K562 (cell line): ENCODE measurements at regions of chr1 and their contacts with region 1.

Region 1: GRCh38 chr1:218459878-218460711 is 115.0 kb downstream of the TGFB2 start:
- DNase-seq: peak in 2 of 4 experiments; percentile 28 to 33
- ATAC-seq: peak; percentile 80
- H3K4me3 ChIP-seq: no peak overlapping the region
- H3K27ac ChIP-seq: no peak overlapping the region
- H3K4me1 ChIP-seq: no peaks in the 10 kb centered on the region; a peak in 1 of 5 replicates
- H3K27me3 ChIP-seq: 0 out of 5 replicates have a peak, but pooled peaks cover 0 to 4% of the 10 kb centered on the region in 2 experiments
- CTCF ChIP-seq: no peak
- EP300 ChIP-seq: no peak
- POLR2A ChIP-seq: no peak
- RAD21 ChIP-seq: no peak

Region 2: DNA sequence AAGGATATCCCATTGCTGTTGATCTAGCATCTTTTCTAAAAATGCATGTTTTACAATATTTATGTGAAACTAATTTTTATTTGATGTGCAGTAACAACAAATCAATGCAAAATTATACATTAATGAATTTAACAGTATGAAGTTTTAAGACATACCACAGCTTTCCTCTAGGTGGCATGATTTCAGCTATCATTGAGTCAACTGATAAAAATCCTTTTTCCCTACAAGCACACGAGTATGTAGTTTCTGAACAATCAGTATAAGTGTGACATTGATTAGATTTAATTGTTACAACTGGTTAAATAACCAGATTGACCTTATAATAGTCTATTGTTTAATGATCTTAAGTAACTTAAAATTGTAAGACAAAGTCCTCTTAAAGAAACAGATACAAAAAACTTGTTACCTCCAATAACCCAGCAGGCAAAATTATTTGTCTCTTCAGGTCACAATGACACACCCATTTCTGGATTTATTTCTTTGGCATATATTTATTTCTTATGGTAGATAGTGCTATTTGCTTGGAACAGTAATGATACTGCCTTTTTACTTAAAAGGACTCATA is 120.7 kb before region 1 on chr1:
- CTCF ChIA-PET with region 1: no interaction called
- POLR2A ChIA-PET with region 1: no interaction called
- in situ Hi-C with region 1: no loop called
- intact Hi-C with region 1: loop called (anchors 5 kb)
- DNase-seq: peak in 3 of 4 experiments; percentile 35 to 53 (median 40)
- ATAC-seq: peak; percentile 76
- H3K4me3 ChIP-seq: no peak overlapping the region
- H3K27ac ChIP-seq: no peak overlapping the region
- H3K4me1 ChIP-seq: no peaks in the 10 kb centered on the region
- H3K27me3 ChIP-seq: no peaks in the 10 kb centered on the region
- CTCF ChIP-seq: peak; percentile 40 to 75 (median 49); a peak in 4 of 6 replicates
- EP300 ChIP-seq: no peak
- POLR2A ChIP-seq: no peak
- RAD21 ChIP-seq: peak; percentile 73 to 84

Region 3: GRCh38 chr1:218377143-218377660 is 82.9 kb before region 1 on chr1:
- CTCF ChIA-PET with region 1: no interaction called
- POLR2A ChIA-PET with region 1: no interaction called
- in situ Hi-C with region 1: no loop called
- intact Hi-C with region 1: no loop called
- DNase-seq: peak; percentile 20 to 49 (median 36)
- ATAC-seq: peak; percentile 54
- H3K4me3 ChIP-seq: no peak overlapping the region
- H3K27ac ChIP-seq: no peak overlapping the region
- H3K4me1 ChIP-seq: no peaks in the 10 kb centered on the region; a peak in 1 of 5 replicates
- H3K27me3 ChIP-seq: peaks cover 5 to 9% of the 10 kb centered on the region in 2 experiments; a peak in 3 of 5 replicates
- CTCF ChIP-seq: no peak
- EP300 ChIP-seq: no peak
- POLR2A ChIP-seq: no peak
- RAD21 ChIP-seq: no peak

Region 4: DNA sequence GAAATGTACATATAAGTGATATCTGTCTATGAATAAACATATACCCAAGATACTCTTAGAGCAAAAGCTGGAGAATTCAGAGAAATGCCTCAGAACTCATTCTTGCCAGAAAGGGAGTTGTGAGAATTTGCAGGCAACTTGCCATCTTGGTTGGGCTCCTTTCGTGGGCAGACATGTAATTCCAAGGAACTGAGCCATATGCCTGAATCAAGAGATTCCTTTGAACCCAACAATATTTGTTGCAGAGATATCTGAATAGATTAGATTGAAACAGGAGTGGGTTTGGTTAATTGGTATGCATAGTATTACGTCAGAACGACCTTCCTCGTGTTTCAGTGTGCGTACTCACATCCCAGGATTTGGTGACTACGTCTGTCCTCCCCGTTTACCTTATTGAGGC is 47.9 kb before region 1 on chr1:
- CTCF ChIA-PET with region 1: no interaction called
- POLR2A ChIA-PET with region 1: no interaction called
- in situ Hi-C with region 1: no loop called
- intact Hi-C with region 1: no loop called
- DNase-seq: no peak
- ATAC-seq: no peak
- H3K4me3 ChIP-seq: no peak overlapping the region
- H3K27ac ChIP-seq: no peak overlapping the region
- H3K4me1 ChIP-seq: no peaks in the 10 kb centered on the region
- H3K27me3 ChIP-seq: peaks cover 5 to 10% of the 10 kb centered on the region in 2 experiments; a peak in 2 of 5 replicates
- CTCF ChIP-seq: no peak
- EP300 ChIP-seq: no peak
- POLR2A ChIP-seq: no peak
- RAD21 ChIP-seq: no peak

Region 5: GRCh38 chr1:218426343-218426657 is 33.8 kb before region 1 on chr1:
- CTCF ChIA-PET with region 1: no interaction called
- POLR2A ChIA-PET with region 1: no interaction called
- in situ Hi-C with region 1: no loop called
- intact Hi-C with region 1: no loop called
- DNase-seq: no peak
- ATAC-seq: no peak
- H3K4me3 ChIP-seq: no peak overlapping the region
- H3K27ac ChIP-seq: no peak overlapping the region
- H3K4me1 ChIP-seq: no peaks in the 10 kb centered on the region
- H3K27me3 ChIP-seq: no peaks in the 10 kb centered on the region
- CTCF ChIP-seq: no peak
- EP300 ChIP-seq: no peak
- POLR2A ChIP-seq: no peak
- RAD21 ChIP-seq: no peak